Left ventricle myocardium superior (tissue), 1 donor: ENCODE measurements at regions of chr1 and their contacts with region 1.

Region 1: GRCh38 chr1:182397771-182398393 is 2.6 kb downstream of the TEDDM1 start:
- DNase-seq: no peak
- ATAC-seq: no peak

Region 2: DNA sequence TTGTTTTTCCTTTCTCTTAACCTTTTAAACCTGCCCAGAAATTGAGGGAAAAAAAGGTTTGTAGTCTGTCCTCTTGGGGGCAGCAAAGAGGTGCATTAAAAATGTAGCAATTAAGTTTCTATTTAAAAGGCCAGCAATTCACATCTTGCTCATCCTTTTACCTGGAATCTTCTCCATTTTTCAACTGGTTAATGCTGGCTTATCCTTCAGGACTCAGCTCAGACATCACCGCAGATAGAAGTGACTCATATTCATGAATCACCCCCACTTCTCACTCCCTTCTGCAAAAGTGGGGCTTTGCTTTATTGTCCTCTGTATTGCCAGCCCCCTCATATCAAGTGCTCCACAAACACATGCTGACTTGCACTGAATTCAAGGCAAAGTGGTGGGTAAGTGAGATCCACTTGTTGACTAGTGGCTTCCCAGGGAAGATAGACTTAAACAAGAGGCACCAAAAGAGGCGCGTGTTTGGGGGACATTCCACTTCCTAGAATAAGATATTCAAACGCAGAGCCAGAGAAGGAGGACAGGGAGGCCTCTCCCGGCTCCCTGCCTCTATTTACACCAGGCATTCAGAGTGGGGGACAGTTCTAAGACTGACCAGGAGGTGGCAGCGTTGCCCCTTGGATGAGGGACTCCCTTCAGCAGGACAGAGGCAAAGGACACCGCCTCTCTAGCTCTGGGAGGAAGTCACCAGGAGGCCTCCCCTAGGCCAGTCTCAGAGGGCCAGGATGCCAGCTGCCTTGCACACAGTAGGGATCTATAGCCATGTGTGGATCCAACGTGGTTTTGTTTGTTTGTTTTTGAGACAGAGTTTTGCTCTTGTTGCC is 313.2 kb before region 1 on chr1:
- intact Hi-C with region 1: loop called (anchors 2 kb)
- DNase-seq: peak; percentile 89
- ATAC-seq: peak; percentile 96

Region 3: GRCh38 chr1:182143154-182143657 is 254.7 kb before region 1 on chr1:
- intact Hi-C with region 1: loop called (anchors 2 kb)
- DNase-seq: peak; percentile 95
- ATAC-seq: peak; percentile 75